ENCODE measurements at regions of chr12 and their contacts with region 1.

Region 1: DNA sequence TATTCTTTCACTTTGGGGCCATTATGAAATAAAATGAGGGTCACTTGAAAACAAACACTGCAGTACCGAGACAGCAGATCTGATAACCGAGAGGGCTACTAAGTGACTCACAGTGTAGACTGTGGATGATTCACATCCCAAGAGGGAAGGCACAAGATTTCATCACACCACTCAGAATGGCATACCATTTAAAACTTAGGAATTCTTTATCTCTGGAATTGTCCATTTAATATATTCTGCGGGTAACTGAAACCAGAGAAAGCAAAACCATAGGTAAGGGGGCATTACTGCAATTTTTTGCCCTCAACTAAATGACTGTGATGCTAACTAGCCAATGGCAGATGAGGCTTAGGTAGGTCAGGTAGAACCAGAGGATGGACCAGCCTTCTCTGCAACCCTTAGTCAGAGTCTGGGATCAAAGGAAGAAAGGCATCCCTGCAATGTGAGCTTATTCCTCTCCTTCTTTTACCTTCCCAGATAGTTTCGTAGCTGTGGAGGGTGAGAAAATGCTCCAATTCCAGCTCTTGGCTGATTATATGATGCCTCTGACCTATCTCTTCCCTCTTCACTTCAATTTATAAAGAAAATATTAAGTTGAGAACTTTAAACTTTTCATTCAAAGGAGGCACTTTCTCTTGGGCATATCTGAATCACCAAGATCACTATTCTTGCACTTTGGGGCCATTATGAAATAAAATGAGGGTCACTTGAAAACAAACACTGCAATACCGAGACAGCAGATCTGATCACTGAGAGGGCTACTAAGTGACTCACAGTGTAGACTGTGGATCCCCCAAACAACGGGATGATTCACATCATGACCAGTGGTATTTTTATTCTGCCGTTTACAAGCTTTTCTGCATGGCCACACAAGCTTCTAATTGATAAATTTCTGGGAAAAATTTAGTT is 6.8 kb downstream of the ART4 start:
- DNase-seq: no peak
- ATAC-seq: no peak
- H3K4me3 ChIP-seq: no peak overlapping the region
- H3K4me3 Mint-ChIP-seq: no peak overlapping the region
- H3K27ac ChIP-seq: no peak overlapping the region
- H3K27ac Mint-ChIP-seq: no peak overlapping the region
- H3K4me1 ChIP-seq: no peaks in the 10 kb centered on the region
- H3K4me1 Mint-ChIP-seq: no peaks in the 10 kb centered on the region
- H3K27me3 ChIP-seq: no peaks in the 10 kb centered on the region
- H3K27me3 Mint-ChIP-seq: peaks cover 26 to 48% (median 39%) of the 10 kb centered on the region in 5 donors

Region 2: DNA sequence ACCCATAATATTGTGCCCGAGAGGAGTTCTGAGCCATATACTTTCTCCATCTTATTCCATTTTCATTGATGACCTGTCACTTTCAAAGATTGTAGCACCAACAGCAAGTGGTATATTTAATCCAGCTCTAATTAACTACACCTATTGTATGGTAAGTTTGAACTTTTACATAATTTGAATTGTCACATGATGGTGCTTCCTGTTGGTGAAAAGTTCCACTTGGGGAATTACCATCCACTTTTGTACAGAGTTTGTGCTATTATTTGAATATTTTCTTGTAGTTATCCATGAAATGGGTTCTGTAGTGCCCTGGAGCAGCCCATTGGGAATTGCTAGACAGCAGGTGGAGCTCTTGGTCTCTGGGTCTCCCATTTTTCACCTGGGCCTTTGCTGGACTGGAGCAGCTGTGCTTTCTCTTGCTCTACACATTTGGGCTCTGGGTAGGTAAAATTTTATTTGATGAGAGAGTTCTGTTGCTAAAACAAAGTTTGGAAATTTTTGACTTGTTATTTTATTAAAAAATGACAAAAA is 25.5 kb before region 1 on chr12:
- CTCF ChIA-PET with region 1: no interaction called
- POLR2A ChIA-PET with region 1: no interaction called
- intact Hi-C with region 1: loop called in 1 of 2 experiments (anchors 2 kb)
- DNase-seq: peak in 1 of 9 donors; percentile 15
- ATAC-seq: peak; percentile 26
- H3K4me3 ChIP-seq: no peak overlapping the region
- H3K4me3 Mint-ChIP-seq: peak overlapping the region in 1 of 10 donors; percentile 6
- H3K27ac ChIP-seq: no peak overlapping the region
- H3K27ac Mint-ChIP-seq: no peak overlapping the region
- H3K4me1 ChIP-seq: peaks cover 0 to 7% of the 10 kb centered on the region in 2 donors
- H3K4me1 Mint-ChIP-seq: peaks cover 4 to 16% (median 14%) of the 10 kb centered on the region in 7 donors
- H3K27me3 ChIP-seq: no peaks in the 10 kb centered on the region
- H3K27me3 Mint-ChIP-seq: peaks cover 0 to 5% (median 0%) of the 10 kb centered on the region in 5 donors

Region 3: DNA sequence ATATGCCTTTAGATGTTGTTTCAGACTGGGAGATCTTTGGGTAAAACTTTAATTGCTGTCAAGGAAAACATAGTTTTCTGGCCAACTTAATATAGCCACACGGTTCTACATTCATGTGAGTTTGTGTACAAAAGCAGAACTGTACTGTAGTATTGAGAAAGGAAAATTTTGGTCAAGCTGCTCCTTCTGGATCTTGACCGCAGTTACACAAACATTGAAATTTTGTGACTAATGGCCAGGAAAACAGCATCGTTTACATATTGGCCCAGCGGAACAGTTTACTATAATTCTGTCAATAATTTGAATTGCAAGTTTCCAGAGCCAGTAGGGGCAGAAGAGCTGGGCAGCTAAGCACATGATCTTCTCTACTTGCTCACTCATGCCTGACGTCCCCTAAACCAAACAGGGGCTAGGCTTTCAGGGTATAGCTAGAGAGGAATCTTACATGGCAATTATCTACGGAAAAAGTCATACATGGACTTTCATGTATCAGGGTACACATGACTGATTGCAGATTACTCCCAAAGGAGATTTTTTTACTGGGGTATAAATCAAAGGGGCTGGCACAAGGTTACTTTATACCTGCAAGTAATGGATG is 18.1 kb after region 1 on chr12:
- CTCF ChIA-PET with region 1: no interaction called
- POLR2A ChIA-PET with region 1: no interaction called
- intact Hi-C with region 1: no loop called
- DNase-seq: no peak
- ATAC-seq: no peak
- H3K4me3 ChIP-seq: no peak overlapping the region
- H3K4me3 Mint-ChIP-seq: no peak overlapping the region
- H3K27ac ChIP-seq: no peak overlapping the region
- H3K27ac Mint-ChIP-seq: no peak overlapping the region
- H3K4me1 ChIP-seq: no peaks in the 10 kb centered on the region
- H3K4me1 Mint-ChIP-seq: peaks cover 0 to 2% (median 0%) of the 10 kb centered on the region in 7 donors
- H3K27me3 ChIP-seq: no peaks in the 10 kb centered on the region
- H3K27me3 Mint-ChIP-seq: no peaks in the 10 kb centered on the region